ENCODE measurements at regions of chr12 and their contacts with region 1.

Region 1: GRCh38 chr12:949453-950191 is at the start of gene RAD52:
- DNase-seq: peak; percentile 98 to 99
- H3K4me3 ChIP-seq: peak within 1 kb of the TSS; percentile 62
- H3K27ac ChIP-seq: peak within 1 kb of the TSS; percentile 79
- H3K4me1 ChIP-seq: peaks cover 19% of the 10 kb centered on the region
- H3K27me3 ChIP-seq: no peaks in the 10 kb centered on the region
- CTCF ChIP-seq: peak; percentile 99
- total RNA-seq, gene RAD52: 19.7 and 25.0 TPM in 2 replicates

Region 2: DNA sequence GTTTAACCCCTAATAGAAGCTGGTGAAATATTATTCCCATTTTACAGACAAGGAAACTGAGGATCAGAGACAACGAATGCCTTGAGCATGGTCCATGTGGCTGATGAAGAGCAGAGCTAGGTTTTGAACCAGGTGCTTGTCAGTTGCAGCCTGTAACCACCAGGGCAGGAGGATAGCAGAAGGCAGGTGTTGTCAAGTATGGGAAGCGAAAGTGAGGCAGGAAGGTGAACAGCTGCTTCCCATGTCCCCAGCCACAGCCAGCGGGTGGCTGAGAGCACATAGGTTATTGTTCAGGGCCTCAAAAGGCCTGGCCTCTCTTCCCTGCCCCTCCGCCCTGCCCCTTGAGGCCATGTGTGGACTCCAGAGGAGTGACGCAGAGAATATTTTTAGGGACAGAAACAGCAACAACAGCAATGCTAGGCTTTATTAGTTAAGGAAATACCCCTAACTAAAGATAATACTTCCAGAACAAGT is 843.5 kb before region 1 on chr12:
- CTCF ChIA-PET with region 1: no interaction called
- POLR2A ChIA-PET with region 1: no interaction called
- intact Hi-C with region 1: no loop called
- DNase-seq: no peak
- H3K4me3 ChIP-seq: no peak overlapping the region
- H3K27ac ChIP-seq: no peak overlapping the region
- H3K4me1 ChIP-seq: 0 out of 2 replicates have a peak, but pooled peaks cover 4% of the 10 kb centered on the region
- H3K27me3 ChIP-seq: peaks cover 37% of the 10 kb centered on the region
- CTCF ChIP-seq: no peak; the same call in 1 of the 2 replicates

Region 3: DNA sequence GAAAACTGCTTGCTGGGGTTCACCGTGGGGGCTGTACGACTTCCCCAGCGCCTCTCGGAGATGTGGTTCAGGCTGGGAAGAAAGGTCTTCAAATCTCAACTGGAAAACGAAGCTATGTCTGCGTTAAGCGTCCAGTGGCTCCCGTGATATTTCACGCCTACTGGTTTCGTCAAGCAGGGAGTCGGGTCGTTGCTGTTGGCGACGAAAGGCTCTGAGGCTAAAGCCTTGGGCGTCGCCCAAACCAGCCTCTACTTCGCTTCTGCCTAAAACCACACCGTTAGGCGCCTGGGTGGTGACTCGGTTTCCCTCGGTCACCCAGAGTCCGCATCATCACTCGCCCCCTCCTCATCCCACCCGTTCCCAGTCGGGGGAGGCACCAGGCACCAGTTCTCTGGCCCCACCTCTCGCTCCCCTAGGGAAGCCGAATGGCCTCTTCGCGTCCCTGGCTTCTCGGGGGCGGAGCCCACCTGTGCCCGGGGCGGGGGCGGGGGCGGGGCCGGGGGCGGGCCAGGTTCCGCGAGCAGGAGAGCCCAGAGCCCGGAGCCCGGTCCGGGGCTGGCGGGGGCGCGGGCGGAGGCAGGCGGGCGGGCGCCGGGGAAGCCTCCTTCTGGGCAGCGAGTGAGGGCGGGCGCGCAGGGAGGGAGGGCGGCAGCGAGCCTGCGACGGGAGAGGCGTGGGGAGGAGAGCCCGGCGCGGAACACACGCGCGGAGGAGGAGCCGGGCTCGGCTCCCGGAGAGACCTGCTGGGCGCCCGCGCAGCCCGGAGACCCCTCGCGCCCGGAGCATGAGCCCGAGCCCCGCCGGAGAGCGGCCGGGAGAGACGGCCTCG is 490.0 kb before region 1 on chr12 and contains the start of gene B4GALNT3:
- CTCF ChIA-PET with region 1: no interaction called
- POLR2A ChIA-PET with region 1: no interaction called
- intact Hi-C with region 1: loop called (anchors 5 kb)
- DNase-seq: peak in 1 of 2 experiments; percentile 67
- H3K4me3 ChIP-seq: peak within 1 kb of the TSS; percentile 59; the same call in 1 of the 2 replicates
- H3K27ac ChIP-seq: no peak within 1 kb of the TSS
- H3K4me1 ChIP-seq: peaks cover 24% of the 10 kb centered on the region
- H3K27me3 ChIP-seq: peaks cover 67% of the 10 kb centered on the region
- CTCF ChIP-seq: no peak
- total RNA-seq, gene B4GALNT3: 7.1 and 8.0 TPM in 2 replicates

Region 4: DNA sequence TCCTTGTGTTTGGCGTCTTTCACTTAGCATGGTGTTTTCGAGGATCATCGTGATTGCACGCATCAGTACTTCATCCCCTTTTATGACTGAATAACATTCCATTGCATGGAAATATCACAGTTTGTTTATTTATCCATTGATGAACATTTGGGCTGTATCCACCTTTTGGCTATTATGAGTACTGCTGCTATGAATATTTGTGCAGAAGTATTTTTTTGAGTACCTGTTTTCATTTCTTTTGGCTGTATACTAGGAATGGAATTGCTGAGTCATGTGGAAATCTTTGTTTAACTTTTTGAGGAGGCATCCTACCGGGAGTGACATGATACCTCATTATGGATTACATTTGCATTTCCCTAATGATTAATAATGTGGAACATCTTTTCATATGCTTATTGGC is 130.9 kb before region 1 on chr12:
- CTCF ChIA-PET with region 1: no interaction called
- POLR2A ChIA-PET with region 1: interaction called, 13 read pairs
- intact Hi-C with region 1: no loop called
- DNase-seq: no peak
- H3K4me3 ChIP-seq: no peak overlapping the region
- H3K27ac ChIP-seq: no peak overlapping the region
- H3K4me1 ChIP-seq: peaks cover 17% of the 10 kb centered on the region
- H3K27me3 ChIP-seq: no peaks in the 10 kb centered on the region
- CTCF ChIP-seq: peak; percentile 20; the same call in 1 of the 2 replicates

Region 5: GRCh38 chr12:1093166-1093751 is 143.6 kb after region 1 on chr12:
- CTCF ChIA-PET with region 1: interaction called, 7 read pairs
- POLR2A ChIA-PET with region 1: no interaction called
- intact Hi-C with region 1: loop called (anchors 5 kb)
- DNase-seq: peak; percentile 47
- H3K4me3 ChIP-seq: no peak overlapping the region
- H3K27ac ChIP-seq: no peak overlapping the region
- H3K4me1 ChIP-seq: no peaks in the 10 kb centered on the region
- H3K27me3 ChIP-seq: no peaks in the 10 kb centered on the region
- CTCF ChIP-seq: peak; percentile 95

Region 6: DNA sequence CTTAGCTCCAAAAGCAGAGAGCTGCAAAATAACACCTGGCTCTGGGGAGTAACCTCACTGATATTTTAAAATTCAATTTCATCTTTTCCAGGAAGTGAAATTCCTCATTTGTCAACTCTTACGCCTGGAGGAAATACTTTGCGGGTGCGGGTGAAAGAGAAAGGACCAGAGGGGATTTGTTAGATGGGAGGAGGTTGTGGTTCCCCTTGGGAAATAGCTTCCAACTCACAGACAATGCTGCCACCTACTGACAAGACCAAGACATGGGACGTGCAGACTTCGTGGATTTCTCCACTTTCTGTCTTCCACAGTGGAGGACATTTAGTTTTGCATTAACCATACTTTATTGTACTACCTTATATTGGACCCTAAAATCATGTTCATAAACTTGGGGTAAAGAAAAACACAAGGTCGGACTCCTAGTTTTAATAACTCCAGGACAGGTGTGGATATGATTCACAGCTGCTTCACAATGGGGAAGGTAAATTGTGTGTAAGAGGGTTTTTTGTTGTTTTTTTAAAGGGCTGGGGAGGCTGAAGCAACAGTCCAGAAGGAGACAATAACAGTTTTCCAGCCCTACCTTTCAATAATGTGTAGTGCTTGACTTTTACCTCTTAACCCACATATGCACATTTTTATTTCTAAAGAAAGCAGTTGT is 633.9 kb after region 1 on chr12:
- CTCF ChIA-PET with region 1: no interaction called
- POLR2A ChIA-PET with region 1: interaction called, 5 read pairs
- intact Hi-C with region 1: loop called (anchors 2 kb)
- DNase-seq: peak; percentile 73 to 77
- H3K4me3 ChIP-seq: peak overlapping the region; percentile 32; the same call in 1 of the 2 replicates
- H3K27ac ChIP-seq: no peak overlapping the region
- H3K4me1 ChIP-seq: peaks cover 6% of the 10 kb centered on the region
- H3K27me3 ChIP-seq: no peaks in the 10 kb centered on the region
- CTCF ChIP-seq: peak; percentile 98

Measured in PC-9 (cell line).